Right ventricle myocardium inferior (tissue), 1 donor: ENCODE measurements at regions of chr1 and their contacts with region 1.

Region 1: DNA sequence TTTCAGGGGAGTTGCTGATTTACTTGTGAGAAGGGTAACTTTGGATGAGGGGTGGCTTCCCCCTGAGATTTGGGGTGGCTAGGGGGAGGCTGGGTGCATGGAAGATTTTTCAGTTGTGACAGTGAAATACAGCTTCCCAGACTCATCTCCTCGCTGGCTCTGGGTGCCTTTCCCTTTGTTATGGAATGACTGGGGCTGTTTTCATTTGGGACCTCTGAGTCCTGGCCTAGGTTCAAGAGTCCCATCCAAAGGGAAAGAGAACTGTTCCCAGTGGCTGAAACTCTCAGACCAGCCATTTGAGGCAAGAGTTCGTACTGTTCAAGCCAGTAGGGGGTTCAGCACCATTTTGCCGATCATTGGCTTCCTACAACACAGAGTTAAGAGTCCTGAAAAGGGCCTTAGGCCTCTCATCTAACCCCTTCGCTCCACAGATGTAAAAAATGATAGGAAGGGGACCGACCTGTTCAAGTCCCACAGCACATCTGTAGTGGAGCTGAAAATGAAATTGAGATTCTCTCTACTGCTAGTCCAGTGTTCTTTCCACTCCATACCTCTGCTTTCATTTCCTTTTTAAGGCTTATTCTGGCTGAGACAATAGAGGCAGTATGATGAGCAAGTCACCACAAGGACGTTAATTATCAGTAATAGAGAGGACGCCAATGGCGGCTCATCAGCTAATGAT is 958 bp downstream of the DDR2 start:
- DNase-seq: no peak
- ATAC-seq: peak; percentile 63

Region 2: DNA sequence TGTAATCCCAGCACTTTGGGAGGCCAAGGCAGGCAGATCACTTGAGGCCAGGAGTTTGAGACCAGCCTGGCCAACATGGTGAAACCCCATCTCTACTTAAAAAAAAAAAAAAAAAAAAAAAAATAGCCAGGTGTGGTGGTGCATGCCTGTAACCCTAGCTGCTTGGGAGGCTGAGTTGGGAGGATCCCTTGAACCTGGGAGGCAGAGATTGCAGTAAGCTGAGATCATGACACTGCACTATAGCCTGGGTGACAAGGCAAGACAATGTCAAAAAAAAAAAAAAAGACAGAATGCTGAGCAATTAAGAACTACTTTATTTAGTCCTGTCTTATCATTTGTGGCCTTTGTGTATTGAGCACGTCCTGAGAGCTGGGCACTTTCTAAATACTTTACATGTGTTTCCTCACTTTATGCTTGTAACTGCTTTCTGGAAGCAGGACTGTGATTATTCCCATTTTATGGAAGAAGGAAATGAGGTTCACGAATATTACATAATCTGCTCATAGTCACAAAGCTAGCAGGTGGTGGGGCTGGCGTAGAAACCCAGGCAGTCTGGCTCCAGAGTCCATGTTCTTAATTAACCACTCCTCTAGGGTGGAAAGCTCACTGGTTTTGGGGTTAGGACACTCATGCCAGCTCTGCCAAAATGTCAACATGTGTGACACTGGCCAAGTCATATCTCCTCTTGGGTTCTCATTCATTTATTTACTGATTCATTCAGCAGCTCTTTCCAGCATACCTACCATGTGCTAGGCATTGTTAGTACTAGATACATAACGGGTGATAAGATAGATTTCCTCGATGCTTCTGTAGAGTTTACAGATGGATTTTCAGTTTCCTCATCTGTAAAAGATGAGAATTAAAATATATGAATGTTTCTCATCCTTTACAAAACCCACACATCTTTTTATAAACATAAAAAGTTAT is 56.8 kb after region 1 on chr1:
- intact Hi-C with region 1: loop called (anchors 5 kb)
- DNase-seq: no peak
- ATAC-seq: peak; percentile 52

Region 3: GRCh38 chr1:162732566-162733335 is 99.5 kb after region 1 on chr1:
- intact Hi-C with region 1: loop called (anchors 5 kb)
- DNase-seq: peak; percentile 77
- ATAC-seq: peak; percentile 93